CD4-positive, alpha-beta T cell (primary cell): ENCODE measurements at regions of chr9 and their contacts with region 1.

Region 1: DNA sequence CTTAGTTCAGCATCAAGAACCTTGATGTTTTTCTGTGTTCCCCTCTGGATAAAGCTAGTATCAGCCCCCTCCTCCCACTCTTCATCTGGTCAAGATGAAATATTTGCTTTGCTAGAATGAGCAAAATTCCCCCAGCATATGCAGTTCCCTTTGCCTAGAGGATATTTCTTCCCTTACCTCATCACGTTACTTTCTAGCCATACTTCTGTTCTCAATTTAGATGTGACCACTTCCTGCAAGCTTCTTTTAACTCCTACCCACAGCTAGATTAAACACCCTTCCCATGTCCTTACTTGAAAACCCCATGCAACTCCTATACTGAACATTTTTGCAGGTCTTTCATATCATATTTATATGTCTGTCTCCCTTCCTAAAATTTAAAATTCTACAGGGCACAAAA is 178.9 kb upstream of the TUSC1 start:
- DNase-seq: no peak
- ATAC-seq: no peak
- H3K4me3 ChIP-seq: no peak overlapping the region
- H3K4me3 Mint-ChIP-seq: no peak overlapping the region
- H3K27ac ChIP-seq: no peak overlapping the region
- H3K27ac Mint-ChIP-seq: no peak overlapping the region
- H3K4me1 ChIP-seq: no peaks in the 10 kb centered on the region
- H3K4me1 Mint-ChIP-seq: no peaks in the 10 kb centered on the region
- H3K27me3 ChIP-seq: no peaks in the 10 kb centered on the region
- H3K27me3 Mint-ChIP-seq: no peaks in the 10 kb centered on the region
- CTCF ChIP-seq: no peak

Region 2: DNA sequence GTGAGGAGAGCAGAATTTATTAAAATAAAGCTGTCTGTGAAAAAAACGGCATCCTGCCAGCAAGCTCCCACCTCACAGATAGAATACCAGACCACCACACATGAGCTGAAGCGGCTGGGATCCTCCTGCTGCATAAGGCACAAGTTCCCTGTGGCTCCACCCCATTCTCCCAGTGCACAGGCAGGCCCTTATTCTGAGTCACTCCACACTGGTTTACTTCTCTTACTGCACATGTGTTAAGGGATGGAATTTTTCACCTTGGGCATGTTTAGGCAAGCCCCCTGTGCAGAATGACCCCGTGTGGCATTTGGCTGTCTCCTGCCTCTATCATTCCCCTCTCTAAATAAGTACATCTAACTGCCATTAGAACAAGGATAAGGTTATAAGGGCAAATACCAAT is 1916.1 kb before region 1 on chr9:
- CTCF ChIA-PET with region 1: no interaction called
- POLR2A ChIA-PET with region 1: no interaction called
- intact Hi-C with region 1: loop called in 1 of 2 experiments (anchors 10 kb)
- DNase-seq: no peak
- ATAC-seq: no peak
- H3K4me3 ChIP-seq: no peak overlapping the region
- H3K4me3 Mint-ChIP-seq: no peak overlapping the region
- H3K27ac ChIP-seq: no peak overlapping the region
- H3K27ac Mint-ChIP-seq: no peak overlapping the region
- H3K4me1 ChIP-seq: no peaks in the 10 kb centered on the region
- H3K4me1 Mint-ChIP-seq: no peaks in the 10 kb centered on the region
- H3K27me3 ChIP-seq: no peaks in the 10 kb centered on the region
- H3K27me3 Mint-ChIP-seq: no peaks in the 10 kb centered on the region
- CTCF ChIP-seq: no peak